AG04449 (cell line): ENCODE measurements at regions of chr17 and their contacts with region 1.

Region 1: DNA sequence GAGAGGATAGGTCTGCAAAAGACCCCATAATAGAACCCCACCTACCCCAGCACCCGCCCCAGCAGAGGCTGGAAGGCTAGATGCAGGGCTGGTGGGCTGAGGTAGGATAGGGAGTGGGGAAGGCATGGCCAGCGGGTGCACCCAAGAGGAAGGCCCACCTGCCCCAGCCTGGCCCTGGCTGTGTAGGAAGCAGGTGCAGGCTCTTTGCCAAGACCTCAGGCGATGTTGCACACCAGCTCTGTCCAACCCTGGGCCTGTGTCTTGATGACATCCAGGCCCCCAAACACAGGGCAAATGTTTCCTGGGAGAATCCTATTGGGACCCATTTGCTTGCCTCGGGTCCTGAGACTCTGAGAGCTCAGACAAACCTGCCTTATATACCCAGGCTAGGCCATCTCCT is 12.2 kb downstream of the UNC119 start:
- DNase-seq: no peak
- H3K4me3 ChIP-seq: no peak overlapping the region
- CTCF ChIP-seq: no peak

Region 2: DNA sequence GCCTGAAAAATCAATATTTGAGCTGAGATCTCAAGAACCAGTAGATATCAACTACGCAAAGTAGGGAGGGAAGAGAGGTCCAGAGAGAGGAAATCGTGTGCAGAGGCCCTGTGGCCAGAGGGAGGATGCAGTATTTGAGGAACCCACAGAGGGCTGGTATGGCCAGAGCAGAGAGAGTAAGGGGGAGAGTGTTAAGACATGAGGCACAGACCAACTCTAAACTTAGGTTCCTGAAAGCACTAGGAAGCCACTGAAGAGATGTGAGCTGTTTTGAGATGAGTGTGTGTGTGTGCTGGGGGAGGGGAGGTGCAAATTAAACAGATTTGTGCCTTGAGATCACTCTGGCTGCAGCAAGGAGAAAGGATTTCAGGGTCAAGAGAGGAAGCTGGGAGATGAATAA is 55.9 kb before region 1 on chr17:
- CTCF ChIA-PET with region 1: interaction called, 258 read pairs
- POLR2A ChIA-PET with region 1: no interaction called
- DNase-seq: no peak
- H3K4me3 ChIP-seq: no peak overlapping the region
- CTCF ChIP-seq: no peak

Region 3: DNA sequence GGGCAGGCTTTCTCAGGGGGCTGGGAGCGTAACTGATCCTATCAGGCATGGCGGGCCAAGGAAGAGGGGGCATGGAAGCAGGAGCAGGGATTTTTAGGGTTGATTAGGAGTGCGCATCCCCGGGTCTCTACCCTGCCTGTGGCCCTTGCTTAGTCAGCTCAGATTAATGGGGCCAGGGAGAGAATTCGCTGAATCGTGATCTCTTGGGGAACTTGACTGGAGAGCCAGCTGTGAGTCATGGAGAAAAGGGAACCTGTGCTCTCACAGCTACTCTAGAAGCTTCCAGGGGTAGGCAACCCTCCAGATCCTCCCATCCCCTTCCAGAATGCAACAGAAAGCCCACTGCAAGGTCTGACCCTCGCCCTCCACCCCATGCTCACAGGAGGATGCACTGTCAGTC is 30.4 kb before region 1 on chr17:
- CTCF ChIA-PET with region 1: interaction called, 258 read pairs
- POLR2A ChIA-PET with region 1: no interaction called
- DNase-seq: no peak
- H3K4me3 ChIP-seq: no peak overlapping the region
- CTCF ChIP-seq: no peak

Region 4: DNA sequence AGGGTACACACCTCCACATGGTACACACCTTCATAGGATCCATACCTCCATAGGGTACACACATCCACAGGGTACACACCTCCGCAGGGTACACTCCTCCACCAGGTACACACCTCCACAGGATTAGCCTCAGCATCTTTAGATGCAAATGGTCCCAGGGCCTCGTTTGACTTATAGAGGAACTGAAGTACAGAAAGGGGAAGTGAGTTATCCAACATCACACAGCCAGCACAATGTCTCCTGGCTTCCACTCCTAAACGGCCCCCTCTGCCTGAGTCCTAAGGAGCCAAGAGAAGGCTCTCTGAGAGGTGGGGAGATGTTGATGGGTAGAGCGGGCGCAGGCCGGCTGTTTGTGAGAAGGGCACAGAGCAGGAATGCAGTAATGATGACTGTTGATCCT is 22.1 kb before region 1 on chr17:
- CTCF ChIA-PET with region 1: interaction called, 10 read pairs
- POLR2A ChIA-PET with region 1: no interaction called
- DNase-seq: no peak
- H3K4me3 ChIP-seq: no peak overlapping the region
- CTCF ChIP-seq: no peak

Region 5: DNA sequence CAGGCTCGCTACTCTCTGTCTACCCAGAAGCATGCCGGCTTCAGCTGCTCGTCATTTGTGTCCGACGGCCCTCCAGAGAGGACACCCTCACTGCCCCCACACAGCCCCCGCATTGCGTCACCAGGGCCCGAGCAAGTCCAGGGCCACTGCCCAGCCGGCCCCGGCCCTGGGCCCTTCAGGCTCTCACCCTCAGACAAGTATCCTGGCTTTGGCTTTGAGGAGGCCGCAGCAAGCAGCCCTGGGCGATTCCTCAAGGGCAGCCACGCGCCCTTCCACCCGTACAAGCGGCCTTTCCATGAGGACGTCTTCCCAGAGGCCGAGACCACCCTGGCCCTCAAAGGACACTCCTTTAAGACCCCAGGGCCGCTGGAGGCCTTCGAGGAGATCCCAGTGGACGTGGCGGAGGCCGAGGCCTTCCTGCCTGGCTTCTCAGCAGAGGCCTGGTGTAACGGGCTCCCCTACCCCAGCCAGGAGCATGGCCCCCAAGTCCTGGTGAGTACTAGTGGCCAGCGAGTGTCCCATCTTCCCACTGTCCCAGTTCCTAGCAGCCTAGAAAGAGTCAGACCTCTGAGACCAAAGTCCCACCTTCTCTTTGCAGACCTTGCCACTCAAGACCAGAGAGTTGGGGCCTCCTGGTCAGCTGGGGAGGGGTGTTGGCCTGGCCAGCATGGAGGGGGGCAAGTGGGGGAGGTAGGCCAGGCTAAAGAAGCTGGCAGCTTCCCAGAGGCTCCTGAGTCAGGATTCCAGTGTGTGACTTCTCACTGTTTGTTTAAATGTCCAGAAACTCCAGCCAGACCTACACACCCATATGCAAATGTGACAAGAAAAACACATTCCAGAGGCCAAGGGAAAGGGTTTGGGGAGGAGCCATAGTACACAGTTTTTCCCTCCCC is 15.5 kb before region 1 on chr17:
- CTCF ChIA-PET with region 1: interaction called, 56 read pairs
- POLR2A ChIA-PET with region 1: no interaction called
- DNase-seq: peak; percentile 38
- H3K4me3 ChIP-seq: no peak overlapping the region
- CTCF ChIP-seq: no peak

Region 6: GRCh38 chr17:28571255-28572122 is 31.3 kb after region 1 on chr17 and contains the start of gene PIGS:
- CTCF ChIA-PET with region 1: interaction called, 12 read pairs
- POLR2A ChIA-PET with region 1: interaction called, 3 read pairs
- DNase-seq: peak; percentile 45
- H3K4me3 ChIP-seq: peak within 1 kb of the TSS; percentile 88
- CTCF ChIP-seq: no peak

Region 7: GRCh38 chr17:28675980-28676379 is 135.7 kb after region 1 on chr17:
- CTCF ChIA-PET with region 1: no interaction called
- POLR2A ChIA-PET with region 1: no interaction called
- DNase-seq: no peak
- H3K4me3 ChIP-seq: no peak overlapping the region
- CTCF ChIP-seq: no peak